ENCODE measurements at regions of chr10 and their contacts with region 1.

Region 1: GRCh38 chr10:96831867-96832720 is at the start of gene LCOR:
- DNase-seq: peak; percentile 48 to 84 (median 65)
- H3K4me3 ChIP-seq: peak within 1 kb of the TSS; percentile 60 to 97 (median 90)
- H3K27ac ChIP-seq: peak within 1 kb of the TSS; percentile 83 to 99 (median 96)
- H3K27me3 ChIP-seq: no peaks in the 10 kb centered on the region
- CTCF ChIP-seq: peak in 12 of 56 donors; percentile 2 to 29 (median 10)
- total RNA-seq, gene LCOR: 32.2 to 74.6 (median 48.4) TPM

Region 2: GRCh38 chr10:96586419-96587263 is 245.5 kb before region 1 on chr10 and contains the start of gene TM9SF3:
- intact Hi-C with region 1: loop called (anchors 2 to 5 kb)
- DNase-seq: peak; percentile 78 to 94 (median 88)
- H3K4me3 ChIP-seq: peak within 1 kb of the TSS; percentile 62 to 99 (median 92)
- H3K27ac ChIP-seq: peak within 1 kb of the TSS; percentile 55 to 98 (median 94)
- H3K27me3 ChIP-seq: no peaks in the 10 kb centered on the region
- CTCF ChIP-seq: peak in 12 of 56 donors; percentile 4 to 26 (median 12)
- total RNA-seq, gene TM9SF3: 52.7 to 101 (median 73.9) TPM

Region 3: GRCh38 chr10:96873756-96874467 is 41.8 kb after region 1 on chr10:
- intact Hi-C with region 1: loop called (anchors 1 to 5 kb)
- DNase-seq: no peak
- H3K4me3 ChIP-seq: peak overlapping the region in 32 of 59 donors; percentile 2 to 47 (median 18)
- H3K27ac ChIP-seq: peak overlapping the region; percentile 8 to 97 (median 85)
- H3K27me3 ChIP-seq: no peaks in the 10 kb centered on the region
- CTCF ChIP-seq: peak in 1 of 56 donors; percentile 8

Region 4: DNA sequence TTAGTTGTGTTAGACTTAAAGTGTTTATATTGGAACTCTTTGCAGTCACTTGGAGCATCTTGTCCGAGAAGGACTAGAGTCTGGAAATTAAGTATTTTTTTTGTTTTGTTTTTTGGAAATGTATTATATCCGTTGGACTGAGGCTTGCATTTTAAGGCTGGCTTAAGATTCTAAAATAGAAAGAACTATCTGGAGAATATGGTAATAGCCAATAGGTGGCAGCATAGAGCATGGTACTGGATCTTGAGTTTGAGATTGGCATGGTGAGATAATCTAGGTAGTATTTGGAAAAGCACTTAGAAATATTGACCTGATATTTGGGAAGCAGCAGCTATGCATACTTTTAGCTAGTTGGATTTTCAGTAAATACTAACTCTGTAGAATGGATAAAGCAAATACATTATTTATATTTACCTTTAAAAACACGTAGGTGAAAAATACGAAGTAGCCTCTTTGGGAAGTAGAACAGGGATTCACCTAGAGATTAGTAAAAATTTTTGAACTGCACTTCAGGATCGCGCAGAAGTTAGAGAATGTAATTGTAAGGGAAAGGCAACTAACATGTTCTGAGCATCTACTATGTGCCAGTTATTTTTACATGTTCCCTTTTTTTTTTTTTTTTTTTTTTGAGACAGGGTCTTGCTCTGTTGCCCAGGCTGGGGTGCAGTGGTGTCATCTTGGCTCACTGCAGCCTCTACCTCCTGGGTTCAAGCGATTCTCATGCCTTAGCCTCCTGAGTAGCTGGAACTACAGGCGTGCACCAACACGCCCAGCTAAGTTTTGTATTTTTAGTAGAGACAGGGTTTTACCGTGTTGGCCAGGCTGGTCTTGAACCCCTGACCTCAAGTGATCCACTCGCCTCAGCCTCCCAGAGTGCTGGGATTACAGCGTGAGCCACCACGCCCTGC is 78.6 kb after region 1 on chr10:
- intact Hi-C with region 1: loop called (anchors 5 to 10 kb)
- DNase-seq: no peak
- H3K4me3 ChIP-seq: no peak overlapping the region
- H3K27ac ChIP-seq: peak overlapping the region in 4 of 59 donors; percentile 7 to 25 (median 20)
- H3K27me3 ChIP-seq: no peaks in the 10 kb centered on the region
- CTCF ChIP-seq: peak; percentile 42 to 80 (median 65)

Region 5: GRCh38 chr10:96921655-96922054 is 89.6 kb after region 1 on chr10:
- intact Hi-C with region 1: no loop called
- DNase-seq: no peak
- H3K4me3 ChIP-seq: no peak overlapping the region
- H3K27ac ChIP-seq: no peak overlapping the region
- H3K27me3 ChIP-seq: no peaks in the 10 kb centered on the region
- CTCF ChIP-seq: no peak

Region 6: GRCh38 chr10:97025613-97026242 is 193.6 kb after region 1 on chr10:
- intact Hi-C with region 1: loop called (anchors 1 to 2 kb)
- DNase-seq: peak in 7 of 10 donors; percentile 28 to 79 (median 61)
- H3K4me3 ChIP-seq: no peak overlapping the region
- H3K27ac ChIP-seq: peak overlapping the region in 6 of 59 donors; percentile 4 to 60 (median 18)
- H3K27me3 ChIP-seq: no peaks in the 10 kb centered on the region
- CTCF ChIP-seq: peak; percentile 61 to 88 (median 77)

Region 7: GRCh38 chr10:97170326-97170725 is 338.2 kb after region 1 on chr10:
- intact Hi-C with region 1: no loop called
- DNase-seq: peak in 2 of 10 donors; percentile 31 to 32
- H3K4me3 ChIP-seq: no peak overlapping the region
- H3K27ac ChIP-seq: peak overlapping the region in 23 of 59 donors; percentile 11 to 70 (median 41)
- H3K27me3 ChIP-seq: no peaks in the 10 kb centered on the region
- CTCF ChIP-seq: no peak

Measured in dorsolateral prefrontal cortex (tissue), 120 donors.